ENCODE measurements at regions of chr11 and their contacts with region 1.

Region 1: GRCh38 chr11:92941676-92942571 is 27.5 kb upstream of the MTNR1B start:
- DNase-seq: peak; percentile 33
- H3K4me3 ChIP-seq: no peak overlapping the region
- H3K27ac ChIP-seq: no peak overlapping the region
- H3K4me1 ChIP-seq: no peaks in the 10 kb centered on the region
- H3K27me3 ChIP-seq: no peaks in the 10 kb centered on the region
- CTCF ChIP-seq: peak; percentile 71 to 73

Region 2: GRCh38 chr11:93020248-93021046 is 78.5 kb after region 1 on chr11:
- CTCF ChIA-PET with region 1: no interaction called
- dilution Hi-C with region 1: no loop called
- in situ Hi-C with region 1: no loop called
- intact Hi-C with region 1: loop called (anchors 1 kb)
- DNase-seq: peak; percentile 98
- H3K4me3 ChIP-seq: peak overlapping the region; percentile 6 to 30 (median 28)
- H3K27ac ChIP-seq: peak overlapping the region; percentile 98
- H3K4me1 ChIP-seq: peaks cover 34% of the 10 kb centered on the region
- H3K27me3 ChIP-seq: no peaks in the 10 kb centered on the region
- CTCF ChIP-seq: no peak

Region 3: DNA sequence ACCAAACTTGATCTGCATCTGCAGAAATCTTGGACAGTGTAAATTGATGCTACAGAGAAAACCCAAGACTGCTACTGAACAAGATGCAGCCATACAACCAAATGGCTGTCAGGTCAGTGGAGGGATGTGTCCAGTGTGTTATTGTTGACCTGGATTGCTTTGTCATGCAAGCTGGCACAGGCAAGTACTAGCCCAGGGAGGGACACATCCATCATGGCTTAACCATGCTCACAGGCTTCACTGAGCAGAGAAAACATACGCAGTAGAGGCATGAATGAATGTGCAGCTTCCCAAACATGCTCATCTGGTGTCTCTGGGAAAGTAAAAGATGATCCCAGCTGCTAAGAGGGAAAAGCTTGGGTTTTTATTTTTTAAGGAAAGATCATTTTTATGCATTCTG is 121.2 kb after region 1 on chr11:
- CTCF ChIA-PET with region 1: no interaction called
- dilution Hi-C with region 1: loop called (anchors 5 kb)
- in situ Hi-C with region 1: no loop called
- intact Hi-C with region 1: loop called (anchors 1 kb)
- DNase-seq: peak; percentile 4
- H3K4me3 ChIP-seq: no peak overlapping the region
- H3K27ac ChIP-seq: no peak overlapping the region
- H3K4me1 ChIP-seq: peaks cover 5% of the 10 kb centered on the region
- H3K27me3 ChIP-seq: no peaks in the 10 kb centered on the region
- CTCF ChIP-seq: no peak

Region 4: DNA sequence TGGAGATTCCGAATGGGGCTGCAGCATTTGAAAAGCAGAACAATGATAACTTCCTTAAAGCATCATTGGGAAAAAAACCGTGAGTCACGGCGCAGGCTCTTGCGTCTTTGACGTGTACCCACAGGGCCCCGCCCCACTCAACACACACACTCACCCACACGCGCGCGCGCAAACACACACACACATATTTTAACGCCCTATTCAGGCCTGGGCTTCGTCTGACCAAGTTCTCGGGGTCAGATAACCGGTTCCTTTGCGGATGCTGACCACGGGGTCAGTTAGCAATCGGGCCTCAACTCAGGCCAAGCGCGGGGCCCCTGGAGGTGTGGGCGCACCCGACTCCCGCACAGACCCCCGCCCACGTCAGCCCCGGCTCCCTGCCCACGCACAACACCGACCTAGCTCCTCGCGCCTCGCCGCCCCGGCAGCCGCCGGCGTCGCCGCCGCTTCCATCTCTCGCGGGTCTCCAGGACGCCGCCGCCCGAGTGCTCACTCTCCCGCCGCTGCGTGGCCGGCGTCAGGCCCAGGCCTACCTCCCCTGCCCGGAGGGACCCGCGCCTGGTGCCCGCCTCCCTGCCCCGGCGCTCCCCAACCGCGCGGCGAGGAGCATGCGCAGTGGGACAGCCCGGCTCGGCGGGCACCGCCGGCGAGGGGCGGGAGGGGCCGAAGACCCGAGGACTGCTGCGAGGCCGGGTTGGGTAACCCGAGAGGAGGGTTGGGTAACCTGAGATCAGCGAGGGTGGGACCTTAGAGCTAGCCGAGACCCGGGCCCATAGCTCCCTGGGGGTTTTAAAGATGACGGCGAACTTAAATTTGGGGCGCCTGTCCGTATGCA is 255.7 kb after region 1 on chr11 and contains the start of gene SLC36A4:
- CTCF ChIA-PET with region 1: no interaction called
- dilution Hi-C with region 1: loop called (anchors 25 kb)
- in situ Hi-C with region 1: no loop called
- intact Hi-C with region 1: no loop called
- DNase-seq: peak; percentile 92
- H3K4me3 ChIP-seq: peak within 1 kb of the TSS; percentile 78 to 92 (median 79)
- H3K27ac ChIP-seq: peak within 1 kb of the TSS; percentile 98
- H3K4me1 ChIP-seq: no peaks in the 10 kb centered on the region
- H3K27me3 ChIP-seq: no peaks in the 10 kb centered on the region
- CTCF ChIP-seq: no peak
- total RNA-seq, gene SLC36A4: 14.3 to 17.7 TPM

Region 5: GRCh38 chr11:93543292-93543977 is 601.5 kb after region 1 on chr11 and contains the start of gene SMCO4:
- CTCF ChIA-PET with region 1: no interaction called
- dilution Hi-C with region 1: no loop called
- in situ Hi-C with region 1: no loop called
- intact Hi-C with region 1: loop called (anchors 5 kb)
- DNase-seq: peak; percentile 75
- H3K4me3 ChIP-seq: peak within 1 kb of the TSS; percentile 51 to 66 (median 52)
- H3K27ac ChIP-seq: no peak within 1 kb of the TSS
- H3K4me1 ChIP-seq: peaks cover 7% of the 10 kb centered on the region
- H3K27me3 ChIP-seq: no peaks in the 10 kb centered on the region
- CTCF ChIP-seq: peak; percentile 15 to 72
- total RNA-seq, gene SMCO4: 2.2 to 3.6 TPM